Heart right ventricle (tissue), 16 donors: ENCODE measurements at regions of chr18 and their contacts with region 1.

Region 1: DNA sequence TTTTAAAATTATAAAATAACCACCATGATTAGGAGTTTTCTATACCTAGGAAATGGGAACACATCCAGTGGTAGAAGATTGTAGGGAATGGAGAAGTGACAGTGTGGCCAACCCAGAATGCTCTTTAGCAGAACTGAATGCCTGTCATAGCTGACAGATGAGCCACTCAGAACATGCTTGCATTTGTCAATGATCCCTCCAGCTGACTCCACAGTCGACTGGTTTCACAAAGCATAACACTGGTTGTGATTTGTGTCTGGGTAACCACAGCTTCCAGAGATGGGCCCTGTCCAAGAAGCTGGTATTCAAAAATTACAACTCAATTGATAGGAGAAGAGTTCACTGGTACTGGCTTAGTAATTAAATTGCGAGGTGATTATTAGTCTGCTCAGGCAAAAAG is 9.0 kb upstream of the CTIF start:
- DNase-seq: peak in 1 of 2 donors; percentile 26
- ATAC-seq: peak; percentile 64 to 92 (median 82)
- H3K4me3 ChIP-seq: no peak overlapping the region
- H3K27ac ChIP-seq: peak overlapping the region in 6 of 10 donors; percentile 13 to 62 (median 38)
- H3K4me1 ChIP-seq: peaks cover 0 to 17% (median 9%) of the 10 kb centered on the region in 9 donors
- H3K27me3 ChIP-seq: peaks cover 0 to 18% (median 0%) of the 10 kb centered on the region in 7 donors
- CTCF ChIP-seq: no peak

Region 2: DNA sequence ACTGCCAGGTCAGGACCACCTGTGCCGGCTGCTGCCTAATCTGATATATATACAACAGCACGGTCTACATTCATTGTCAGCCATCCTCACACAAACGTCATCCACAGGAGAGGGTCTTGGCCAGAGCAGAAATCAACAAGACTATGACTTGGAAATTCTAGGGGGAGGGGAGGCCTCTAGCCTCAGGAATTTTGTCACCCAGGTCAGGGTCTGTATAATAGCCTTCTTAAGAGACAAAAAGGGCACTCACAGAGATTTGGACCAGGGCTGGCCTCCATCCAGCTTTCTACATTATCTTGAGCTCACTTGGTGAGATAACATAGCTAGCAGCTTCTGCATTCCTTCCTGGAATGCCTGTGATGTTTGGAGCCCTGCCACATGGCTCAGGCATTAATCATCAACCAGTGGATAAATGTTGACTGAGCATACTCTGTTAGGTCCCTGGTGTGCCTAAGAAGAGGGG is 41.4 kb before region 1 on chr18:
- intact Hi-C with region 1: loop called in 4 of 10 experiments (anchors 5 to 10 kb)
- DNase-seq: peak; percentile 63 to 81
- ATAC-seq: peak; percentile 79 to 95 (median 91)
- H3K4me3 ChIP-seq: no peak overlapping the region
- H3K27ac ChIP-seq: peak overlapping the region in 5 of 10 donors; percentile 46 to 75 (median 72)
- H3K4me1 ChIP-seq: peaks cover 0 to 37% (median 16%) of the 10 kb centered on the region in 9 donors
- H3K27me3 ChIP-seq: no peaks in the 10 kb centered on the region
- CTCF ChIP-seq: no peak

Region 3: GRCh38 chr18:48493434-48494230 is 36.2 kb before region 1 on chr18:
- intact Hi-C with region 1: loop called in 4 of 10 experiments (anchors 5 to 10 kb)
- DNase-seq: no peak
- ATAC-seq: peak in 2 of 8 donors; percentile 45 to 56
- H3K4me3 ChIP-seq: no peak overlapping the region
- H3K27ac ChIP-seq: peak overlapping the region in 2 of 10 donors; percentile 0 to 40
- H3K4me1 ChIP-seq: peaks cover 0 to 31% (median 17%) of the 10 kb centered on the region in 9 donors
- H3K27me3 ChIP-seq: peaks cover 0 to 2% (median 0%) of the 10 kb centered on the region in 7 donors
- CTCF ChIP-seq: no peak

Region 4: DNA sequence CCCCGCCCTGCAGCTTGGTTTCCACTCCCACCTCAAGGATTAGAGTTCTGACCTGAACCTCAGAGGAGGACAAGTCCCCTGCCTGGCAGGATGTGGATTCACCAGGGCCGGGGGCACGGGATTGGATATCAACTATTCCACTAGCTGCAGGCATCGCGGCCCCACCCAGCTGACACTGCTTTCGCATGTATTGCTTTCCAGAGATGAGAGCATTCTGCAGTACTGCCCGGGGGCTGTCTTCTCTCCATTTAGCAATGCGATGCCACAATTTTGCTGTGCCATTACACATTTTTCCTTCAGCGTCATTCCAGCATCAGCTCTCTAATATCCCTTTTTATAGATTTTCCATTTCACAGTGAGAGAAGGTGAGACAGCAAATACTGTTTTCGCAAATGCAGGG is 51.0 kb after region 1 on chr18:
- intact Hi-C with region 1: no loop called
- DNase-seq: no peak
- ATAC-seq: peak in 1 of 8 donors; percentile 25
- H3K4me3 ChIP-seq: no peak overlapping the region
- H3K27ac ChIP-seq: no peak overlapping the region
- H3K4me1 ChIP-seq: peaks cover 8 to 54% (median 29%) of the 10 kb centered on the region in 9 donors
- H3K27me3 ChIP-seq: no peaks in the 10 kb centered on the region
- CTCF ChIP-seq: no peak